ENCODE measurements at regions of chr4 and their contacts with region 1.

Region 1: DNA sequence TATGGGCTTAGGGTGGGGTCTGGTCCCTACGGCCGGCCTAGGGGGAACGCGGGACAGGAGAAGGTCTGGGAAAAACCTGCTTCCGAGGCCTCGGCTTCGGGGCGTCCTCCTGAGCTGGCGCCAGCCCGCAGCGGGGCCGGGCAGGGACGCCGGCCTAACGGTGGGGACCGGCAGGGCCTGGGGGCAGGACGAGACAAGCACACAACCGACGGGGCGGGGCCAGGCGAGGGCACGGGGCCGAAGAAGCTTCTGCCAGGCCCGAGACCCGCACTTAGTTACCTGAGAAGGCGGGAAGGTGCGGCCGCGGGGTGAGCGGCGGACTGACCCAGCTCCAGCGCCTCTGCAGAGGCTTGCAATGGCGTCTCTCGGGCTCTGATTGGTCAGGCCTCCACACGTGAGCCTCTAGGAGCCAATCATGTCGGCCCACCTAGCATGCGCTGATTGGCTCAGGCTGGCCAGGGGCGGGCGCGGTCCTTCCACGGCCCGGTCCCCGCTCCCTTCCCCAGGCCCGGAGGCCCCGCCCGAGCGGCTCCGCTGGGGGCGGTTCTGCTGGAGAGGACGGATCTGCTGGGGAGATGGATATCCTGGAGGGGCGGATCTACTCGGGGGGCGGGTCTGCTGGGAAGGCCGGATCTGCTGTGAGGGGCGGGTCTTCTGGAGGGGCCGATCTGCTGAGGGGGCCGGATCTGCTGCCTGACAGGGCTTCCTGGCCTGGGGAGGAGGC is 44.3 kb downstream of the CPLX1 start:
- DNase-seq: peak; percentile 99
- ATAC-seq: peak; percentile 96
- H3K4me3 Mint-ChIP-seq: peak overlapping the region; percentile 82
- H3K27ac Mint-ChIP-seq: peak overlapping the region; percentile 93
- H3K4me1 Mint-ChIP-seq: peaks cover 50% of the 10 kb centered on the region
- H3K27me3 Mint-ChIP-seq: peaks cover 15% of the 10 kb centered on the region

Region 2: DNA sequence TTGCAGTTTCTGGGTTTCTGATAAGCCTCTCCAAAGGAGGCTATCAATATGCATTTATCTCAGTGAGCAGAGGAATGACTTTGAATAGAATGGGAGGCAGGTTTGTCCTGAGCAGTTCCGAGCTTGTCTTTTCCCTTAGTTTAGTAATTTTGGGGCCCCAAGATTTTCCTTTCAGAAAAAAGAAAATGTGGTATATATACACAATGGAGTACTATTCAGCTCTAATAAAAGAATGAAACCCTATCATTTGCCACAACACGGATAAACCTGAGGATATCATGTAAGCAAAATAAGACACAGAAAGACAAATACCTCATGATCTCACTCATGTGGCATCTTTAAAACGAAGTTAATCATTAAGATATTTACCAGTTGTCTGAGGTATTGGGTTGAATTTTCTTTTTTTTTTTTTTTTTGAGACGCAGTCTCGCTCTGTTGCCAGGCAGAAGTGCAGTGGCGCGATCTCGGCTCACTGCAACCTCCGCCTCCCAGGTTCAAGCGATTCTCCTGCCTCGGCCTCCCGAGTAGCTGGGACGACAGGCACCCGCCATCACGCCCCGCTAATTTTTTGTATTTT is 283.2 kb before region 1 on chr4:
- CTCF ChIA-PET with region 1: no interaction called
- POLR2A ChIA-PET with region 1: no interaction called
- intact Hi-C with region 1: loop called in 1 of 2 experiments (anchors 1 kb)
- DNase-seq: no peak
- ATAC-seq: peak; percentile 23
- H3K4me3 Mint-ChIP-seq: peak overlapping the region; percentile 94
- H3K27ac Mint-ChIP-seq: peak overlapping the region; percentile 97
- H3K4me1 Mint-ChIP-seq: peaks cover 33% of the 10 kb centered on the region
- H3K27me3 Mint-ChIP-seq: no peaks in the 10 kb centered on the region

Region 3: GRCh38 chr4:705278-706082 is 76.2 kb before region 1 on chr4 and contains the start of gene PCGF3:
- CTCF ChIA-PET with region 1: no interaction called
- POLR2A ChIA-PET with region 1: no interaction called
- intact Hi-C with region 1: loop called in 1 of 2 experiments (anchors 1 kb)
- DNase-seq: peak; percentile 99
- ATAC-seq: peak; percentile 99
- H3K4me3 Mint-ChIP-seq: peak within 1 kb of the TSS; percentile 68
- H3K27ac Mint-ChIP-seq: no peak within 1 kb of the TSS
- H3K4me1 Mint-ChIP-seq: peaks cover 15% of the 10 kb centered on the region
- H3K27me3 Mint-ChIP-seq: no peaks in the 10 kb centered on the region
- total RNA-seq, gene PCGF3: 20.6 to 22.5 TPM

Region 4: DNA sequence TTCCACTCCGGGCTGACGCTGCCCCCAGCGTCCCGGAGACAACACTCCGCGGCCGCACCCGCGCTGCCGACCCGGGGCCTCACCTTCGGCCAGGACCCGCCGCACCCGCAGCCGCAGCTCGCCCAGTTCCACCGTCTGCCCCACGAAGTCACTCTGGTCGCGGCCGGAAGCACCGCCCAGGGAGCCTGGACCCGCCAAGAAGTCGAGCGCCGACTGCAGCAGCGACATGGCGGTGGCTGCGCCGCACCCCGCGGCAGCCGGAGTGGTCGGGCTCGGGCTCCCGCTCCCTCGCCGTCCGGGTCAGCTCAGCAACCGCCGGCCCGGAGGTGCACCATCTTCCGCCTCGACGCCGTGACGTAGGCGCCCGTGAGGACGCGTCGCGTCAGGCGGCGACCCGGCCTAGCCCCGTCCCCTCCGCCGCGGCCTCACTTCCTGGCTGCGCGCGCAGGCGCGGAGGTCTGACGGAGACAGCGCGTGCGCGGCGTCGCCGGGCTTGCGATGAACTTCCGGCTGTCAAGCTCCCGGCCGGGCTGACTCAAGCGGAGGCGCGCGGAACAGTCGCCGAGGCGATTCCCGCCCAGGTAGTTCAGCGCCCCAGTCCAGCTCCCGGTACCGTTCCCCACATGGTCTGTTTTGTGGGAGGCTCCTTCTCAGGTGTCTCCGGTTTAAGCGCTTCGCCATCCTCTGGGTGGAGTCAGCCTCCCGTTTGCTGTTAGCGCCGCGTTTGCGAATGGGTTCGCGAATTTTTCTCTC is 150.5 kb after region 1 on chr4 and contains the starts of genes GAK and TMEM175:
- CTCF ChIA-PET with region 1: interaction called, 3 read pairs
- POLR2A ChIA-PET with region 1: interaction called, 3 read pairs
- intact Hi-C with region 1: loop called (anchors 1 to 5 kb)
- DNase-seq: peak; percentile 98
- ATAC-seq: peak; percentile 95
- H3K4me3 Mint-ChIP-seq: peak within 1 kb of the TSS; percentile 87
- H3K27ac Mint-ChIP-seq: peak within 1 kb of the TSS; percentile 89
- H3K4me1 Mint-ChIP-seq: peaks cover 29% of the 10 kb centered on the region
- H3K27me3 Mint-ChIP-seq: no peaks in the 10 kb centered on the region
- total RNA-seq, gene GAK: 82.9 to 88.0 TPM
- total RNA-seq, gene TMEM175: 15.2 to 17.3 TPM

Region 5: DNA sequence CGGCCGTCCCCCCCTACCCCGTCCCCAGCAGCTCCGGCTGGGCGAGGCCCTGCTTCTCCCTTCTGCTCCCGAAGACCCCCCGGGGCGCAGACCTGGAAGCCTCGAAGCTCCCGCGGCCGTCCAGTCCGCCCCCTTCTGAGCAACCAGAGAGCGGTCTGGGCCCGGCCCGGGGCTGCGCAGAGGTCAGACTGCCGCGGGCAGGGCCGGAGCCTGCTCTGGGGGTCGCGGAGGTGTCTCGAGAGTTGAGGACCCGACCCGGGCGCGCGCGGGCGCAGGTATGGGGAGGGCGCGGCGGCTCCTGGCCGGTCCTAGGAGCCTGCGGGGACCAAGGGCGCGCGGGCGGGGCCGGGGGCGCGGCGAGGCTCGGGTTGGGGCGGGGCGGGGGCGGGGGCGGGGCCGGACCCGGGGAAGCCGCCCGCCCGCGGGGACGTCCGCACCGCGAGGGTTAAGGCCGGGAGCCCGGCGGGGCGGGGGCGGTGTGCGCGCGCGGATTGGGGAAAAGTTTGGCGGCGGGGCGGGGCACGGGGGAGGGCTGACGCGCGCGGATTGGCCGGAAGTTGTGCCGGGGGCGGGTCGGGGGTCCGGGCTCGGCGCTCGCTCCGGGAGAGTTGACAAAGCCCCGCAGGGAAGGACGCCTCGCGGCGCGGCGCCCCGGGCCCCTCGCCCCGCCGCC is 229.5 kb after region 1 on chr4 and contains the start of gene FGFRL1:
- CTCF ChIA-PET with region 1: no interaction called
- POLR2A ChIA-PET with region 1: no interaction called
- intact Hi-C with region 1: loop called in 1 of 2 experiments (anchors 1 kb)
- DNase-seq: peak; percentile 97
- ATAC-seq: peak; percentile 59
- H3K4me3 Mint-ChIP-seq: peak within 1 kb of the TSS; percentile 75
- H3K27ac Mint-ChIP-seq: peak within 1 kb of the TSS; percentile 80
- H3K4me1 Mint-ChIP-seq: peaks cover 9% of the 10 kb centered on the region
- H3K27me3 Mint-ChIP-seq: peaks cover 26% of the 10 kb centered on the region
- total RNA-seq, gene FGFRL1: 17.6 to 23.5 TPM

Region 6: DNA sequence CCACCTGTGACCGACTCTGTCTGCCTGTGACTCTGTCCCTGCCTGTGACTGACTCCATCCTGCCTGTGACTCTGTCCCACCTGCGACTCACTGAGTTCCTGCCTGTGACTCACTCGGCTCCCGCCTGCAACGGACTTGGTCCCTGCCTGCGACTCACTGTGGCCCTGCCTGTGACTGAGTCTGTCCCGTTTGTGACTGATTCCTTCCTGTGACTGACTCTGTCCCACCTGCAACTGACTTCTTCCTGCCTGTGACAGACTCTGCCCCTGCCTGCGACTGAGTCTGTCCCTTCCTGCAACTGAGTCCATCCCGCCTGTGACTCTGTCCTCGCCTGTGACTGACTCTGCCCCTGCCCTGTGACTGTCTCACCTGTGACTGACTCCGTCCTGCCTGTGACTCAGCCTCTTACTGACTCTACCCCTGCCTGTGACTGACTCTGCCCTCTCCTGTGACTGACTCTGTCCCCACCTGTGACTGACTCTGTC is 555.8 kb after region 1 on chr4:
- CTCF ChIA-PET with region 1: no interaction called
- POLR2A ChIA-PET with region 1: no interaction called
- intact Hi-C with region 1: no loop called
- DNase-seq: peak; percentile 89
- ATAC-seq: peak; percentile 92
- H3K4me3 Mint-ChIP-seq: no peak overlapping the region
- H3K27ac Mint-ChIP-seq: peak overlapping the region; percentile 78
- H3K4me1 Mint-ChIP-seq: peaks cover 41% of the 10 kb centered on the region
- H3K27me3 Mint-ChIP-seq: no peaks in the 10 kb centered on the region

Region 7: GRCh38 chr4:1683736-1684505 is 902.3 kb after region 1 on chr4 and contains the start of gene FAM53A:
- CTCF ChIA-PET with region 1: no interaction called
- POLR2A ChIA-PET with region 1: no interaction called
- intact Hi-C with region 1: loop called in 1 of 2 experiments (anchors 10 kb)
- DNase-seq: no peak
- ATAC-seq: peak; percentile 96
- H3K4me3 Mint-ChIP-seq: peak within 1 kb of the TSS; percentile 69
- H3K27ac Mint-ChIP-seq: peak within 1 kb of the TSS; percentile 69
- H3K4me1 Mint-ChIP-seq: peaks cover 12% of the 10 kb centered on the region
- H3K27me3 Mint-ChIP-seq: no peaks in the 10 kb centered on the region
- total RNA-seq, gene FAM53A: 2.0 to 2.5 TPM